ENCODE measurements at regions of chr20 and their contacts with region 1.

Region 1: DNA sequence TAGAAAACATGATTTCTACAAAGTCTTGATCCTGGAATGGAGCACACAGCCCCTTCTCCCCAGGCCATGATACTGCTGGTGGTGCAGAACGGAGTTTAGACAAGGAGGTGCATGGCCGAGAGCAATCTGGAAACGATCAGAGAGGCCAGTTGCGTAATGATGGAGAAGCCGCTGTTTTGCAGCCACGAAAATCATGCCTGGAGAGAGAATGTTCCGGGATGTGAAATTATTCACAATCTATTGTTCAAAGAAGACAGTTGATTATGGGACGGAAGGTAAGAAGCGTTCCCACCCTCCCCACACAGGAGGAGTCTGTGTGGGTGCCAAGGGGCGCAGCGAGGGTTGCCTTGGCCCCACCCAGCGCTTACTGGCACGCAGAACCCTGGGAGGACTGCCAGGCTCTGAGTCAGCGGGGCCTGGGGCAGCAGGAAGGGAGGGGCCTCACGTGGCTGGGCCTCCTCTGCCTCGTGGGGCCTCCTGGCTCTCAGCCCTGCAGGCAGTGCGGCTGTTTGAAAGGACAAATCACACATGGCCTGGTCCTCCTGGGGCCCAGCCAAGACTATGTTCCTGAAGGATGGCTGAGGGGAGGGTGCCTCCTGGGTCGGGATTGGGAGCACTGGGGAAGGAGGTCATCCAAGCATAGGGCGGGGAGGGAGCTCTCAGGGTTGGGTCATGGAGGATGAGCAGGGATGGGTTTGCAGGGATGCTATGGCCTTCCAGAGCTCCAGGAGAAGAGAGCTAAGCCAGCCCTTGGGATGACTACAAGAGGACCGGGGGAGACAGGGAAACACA is 8.7 kb upstream of the AP5S1 start:
- DNase-seq: peak; percentile 91
- ATAC-seq: peak; percentile 86
- H3K4me3 Mint-ChIP-seq: peak overlapping the region; percentile 76
- H3K27ac Mint-ChIP-seq: peak overlapping the region; percentile 96
- H3K4me1 Mint-ChIP-seq: peaks cover 82% of the 10 kb centered on the region
- H3K27me3 Mint-ChIP-seq: no peaks in the 10 kb centered on the region

Region 2: GRCh38 chr20:3572151-3572550 is 239.5 kb before region 1 on chr20:
- CTCF ChIA-PET with region 1: no interaction called
- POLR2A ChIA-PET with region 1: no interaction called
- DNase-seq: no peak
- ATAC-seq: no peak
- H3K4me3 Mint-ChIP-seq: no peak overlapping the region
- H3K27ac Mint-ChIP-seq: no peak overlapping the region
- H3K4me1 Mint-ChIP-seq: no peaks in the 10 kb centered on the region
- H3K27me3 Mint-ChIP-seq: no peaks in the 10 kb centered on the region

Region 3: GRCh38 chr20:3795511-3796468 is 15.9 kb before region 1 on chr20 and contains the start of gene CDC25B:
- CTCF ChIA-PET with region 1: interaction called, 126 read pairs
- POLR2A ChIA-PET with region 1: interaction called, 44 read pairs
- DNase-seq: peak; percentile 97
- ATAC-seq: peak; percentile 79
- H3K4me3 Mint-ChIP-seq: peak within 1 kb of the TSS; percentile 93
- H3K27ac Mint-ChIP-seq: peak within 1 kb of the TSS; percentile 98
- H3K4me1 Mint-ChIP-seq: peaks cover 41% of the 10 kb centered on the region
- H3K27me3 Mint-ChIP-seq: no peaks in the 10 kb centered on the region
- total RNA-seq, gene CDC25B: 294 to 298 TPM